Mammary epithelial cell (primary cell): ENCODE measurements at regions of chr19 and their contacts with region 1.

Region 1: DNA sequence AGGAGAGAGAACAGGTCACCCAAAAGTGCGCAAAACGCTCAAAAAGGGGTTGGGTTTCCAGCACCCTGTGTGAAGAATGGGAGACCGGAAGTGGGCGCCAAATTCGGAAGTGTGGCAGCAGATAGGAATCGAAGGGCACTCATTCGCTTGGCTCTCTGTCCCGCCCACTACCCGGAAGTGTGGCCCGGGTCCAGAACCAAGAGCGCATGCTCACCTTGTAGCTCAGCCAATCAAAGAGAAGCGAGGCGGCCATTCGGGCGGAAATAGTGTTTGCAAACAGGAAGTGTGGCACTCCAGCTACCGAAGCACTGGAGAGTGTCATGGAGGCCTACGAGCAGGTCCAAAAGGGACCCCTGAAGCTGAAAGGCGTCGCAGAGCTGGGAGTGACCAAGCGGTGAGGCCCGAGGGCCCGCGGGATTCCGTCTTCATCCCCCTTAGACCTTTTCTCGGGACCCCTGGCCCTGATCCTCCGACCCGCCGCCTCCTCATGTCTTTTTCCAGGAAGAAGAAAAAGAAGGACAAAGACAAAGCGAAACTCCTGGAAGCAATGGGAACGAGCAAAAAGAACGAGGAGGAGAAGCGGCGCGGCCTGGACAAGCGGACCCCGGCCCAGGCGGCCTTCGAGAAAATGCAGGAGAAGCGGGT is at the start of gene FAM32A:
- DNase-seq: peak; percentile 99
- H3K4me3 ChIP-seq: peak within 1 kb of the TSS; percentile 64 to 91 (median 91)
- H3K27ac ChIP-seq: peak within 1 kb of the TSS; percentile 67
- H3K4me1 ChIP-seq: no peaks in the 10 kb centered on the region
- H3K27me3 ChIP-seq: no peaks in the 10 kb centered on the region
- CTCF ChIP-seq: peak in 1 of 2 donors; percentile 18
- total RNA-seq, gene FAM32A: 57.3 to 59.5 TPM

Region 2: DNA sequence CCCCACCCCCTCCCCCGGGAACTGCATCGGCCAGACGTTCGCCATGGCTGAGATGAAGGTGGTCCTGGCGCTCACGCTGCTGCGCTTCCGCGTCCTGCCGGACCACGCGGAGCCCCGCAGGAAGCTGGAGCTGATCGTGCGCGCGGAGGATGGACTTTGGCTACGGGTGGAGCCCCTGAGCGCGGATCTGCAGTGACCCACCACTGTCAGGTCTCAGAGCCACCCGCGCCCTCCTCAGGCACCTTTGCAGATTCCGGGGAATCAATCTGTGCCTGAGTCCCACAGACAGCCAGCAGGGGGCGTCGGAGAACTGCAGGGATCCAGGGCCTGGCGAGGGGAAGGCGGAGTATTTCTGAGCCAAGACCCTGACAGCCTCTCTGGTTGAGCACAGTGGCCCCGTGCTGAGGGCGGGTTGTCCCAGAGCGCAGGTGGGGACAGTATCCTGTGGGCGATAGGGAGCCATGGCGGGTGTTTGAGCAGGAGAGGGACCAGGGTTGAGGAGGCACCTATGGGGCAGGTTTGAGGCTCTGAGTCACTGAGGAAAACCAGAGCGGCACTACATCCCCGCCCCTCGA is 600.6 kb before region 1 on chr19:
- CTCF ChIA-PET with region 1: no interaction called
- dilution Hi-C with region 1: no loop called
- in situ Hi-C with region 1: no loop called
- intact Hi-C with region 1: loop called (anchors 2 kb)
- DNase-seq: peak; percentile 45
- H3K4me3 ChIP-seq: no peak overlapping the region
- H3K27ac ChIP-seq: no peak overlapping the region
- H3K4me1 ChIP-seq: peaks cover 3% of the 10 kb centered on the region
- H3K27me3 ChIP-seq: no peaks in the 10 kb centered on the region
- CTCF ChIP-seq: peak; percentile 89 to 97

Region 3: GRCh38 chr19:15629003-15629880 is 556.0 kb before region 1 on chr19:
- CTCF ChIA-PET with region 1: no interaction called
- dilution Hi-C with region 1: no loop called
- in situ Hi-C with region 1: loop called (anchors 10 to 25 kb)
- intact Hi-C with region 1: loop called (anchors 1 kb)
- DNase-seq: peak; percentile 64
- H3K4me3 ChIP-seq: peak overlapping the region in 1 of 3 experiments; percentile 12
- H3K27ac ChIP-seq: no peak overlapping the region
- H3K4me1 ChIP-seq: peaks cover 3% of the 10 kb centered on the region
- H3K27me3 ChIP-seq: no peaks in the 10 kb centered on the region
- CTCF ChIP-seq: peak; percentile 89 to 94

Region 4: DNA sequence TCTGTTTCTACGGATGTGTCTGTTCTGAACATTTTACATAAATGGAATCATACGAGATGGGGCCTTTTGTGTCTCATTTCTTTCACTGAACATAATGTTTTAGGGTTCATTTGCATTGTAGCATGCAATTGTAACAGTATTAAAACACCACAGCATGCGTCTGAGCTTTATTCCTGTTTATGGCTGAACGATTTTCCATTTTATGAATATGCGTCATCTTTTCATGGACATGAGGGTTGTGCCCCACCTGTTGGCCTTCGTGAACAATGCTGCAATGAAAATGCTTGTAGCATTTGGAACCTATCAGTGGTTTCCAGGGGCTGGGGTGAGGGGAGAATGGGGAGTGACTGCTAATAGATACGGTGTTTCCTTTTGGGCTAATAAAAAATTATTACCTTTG is 374.9 kb before region 1 on chr19:
- CTCF ChIA-PET with region 1: no interaction called
- dilution Hi-C with region 1: no loop called
- in situ Hi-C with region 1: loop called in 1 of 2 experiments (anchors 25 kb)
- intact Hi-C with region 1: loop called (anchors 1 kb)
- DNase-seq: peak; percentile 38
- H3K4me3 ChIP-seq: no peak overlapping the region
- H3K27ac ChIP-seq: no peak overlapping the region
- H3K4me1 ChIP-seq: peaks cover 13% of the 10 kb centered on the region
- H3K27me3 ChIP-seq: peaks cover 2% of the 10 kb centered on the region
- CTCF ChIP-seq: peak in 1 of 2 donors; percentile 62

Region 5: DNA sequence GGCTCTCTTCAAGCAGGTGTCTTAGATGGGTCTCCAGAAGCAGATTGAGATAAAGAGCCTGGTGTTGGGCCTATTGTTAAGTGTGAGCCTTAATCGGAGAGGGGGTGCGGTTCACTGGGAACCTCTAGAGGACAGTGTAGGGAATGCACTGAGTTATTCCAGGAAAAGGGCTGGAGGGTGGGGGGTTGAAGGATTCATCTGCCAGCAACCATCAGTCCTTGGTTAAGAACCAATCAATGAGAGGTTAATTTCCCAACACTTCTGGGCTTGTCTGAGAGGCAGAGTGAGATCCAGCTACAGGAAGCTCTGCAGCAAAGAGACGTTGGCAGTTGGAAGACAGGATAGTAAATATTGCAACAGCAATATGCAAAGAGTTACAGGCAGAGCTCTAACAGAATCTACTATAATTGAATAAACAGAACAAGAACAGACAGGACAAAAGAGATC is 316.1 kb before region 1 on chr19:
- CTCF ChIA-PET with region 1: no interaction called
- dilution Hi-C with region 1: no loop called
- in situ Hi-C with region 1: no loop called
- intact Hi-C with region 1: loop called (anchors 2 kb)
- DNase-seq: peak; percentile 75
- H3K4me3 ChIP-seq: no peak overlapping the region
- H3K27ac ChIP-seq: no peak overlapping the region
- H3K4me1 ChIP-seq: peaks cover 12% of the 10 kb centered on the region
- H3K27me3 ChIP-seq: no peaks in the 10 kb centered on the region
- CTCF ChIP-seq: peak; percentile 80 to 87

Region 6: DNA sequence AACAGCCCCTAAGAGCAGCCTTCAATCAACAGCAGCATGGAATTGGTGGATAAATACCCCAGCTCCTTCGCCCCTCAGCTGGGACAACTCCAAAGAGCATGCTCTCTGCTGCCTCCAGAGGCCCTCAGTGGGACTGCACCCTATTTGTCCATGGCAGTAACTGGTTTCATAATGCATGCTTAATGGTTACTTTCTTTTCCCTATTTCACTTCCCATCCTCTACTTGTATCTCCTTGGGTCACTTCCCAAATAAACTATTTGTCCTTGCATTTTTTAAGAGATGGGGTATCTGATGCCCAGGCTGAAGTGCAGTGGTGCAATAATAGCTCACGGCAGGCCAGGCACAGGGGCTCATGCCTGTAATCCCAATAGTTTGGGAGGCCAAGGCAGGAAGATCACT is 122.5 kb before region 1 on chr19:
- CTCF ChIA-PET with region 1: no interaction called
- dilution Hi-C with region 1: no loop called
- in situ Hi-C with region 1: no loop called
- intact Hi-C with region 1: loop called (anchors 1 kb)
- DNase-seq: no peak
- H3K4me3 ChIP-seq: no peak overlapping the region
- H3K27ac ChIP-seq: no peak overlapping the region
- H3K4me1 ChIP-seq: peaks cover 12% of the 10 kb centered on the region
- H3K27me3 ChIP-seq: no peaks in the 10 kb centered on the region
- CTCF ChIP-seq: peak; percentile 87 to 98

Region 7: GRCh38 chr19:16111160-16111908 is 73.9 kb before region 1 on chr19 and contains the start of gene RAB8A:
- CTCF ChIA-PET with region 1: no interaction called
- dilution Hi-C with region 1: no loop called
- in situ Hi-C with region 1: no loop called
- intact Hi-C with region 1: loop called (anchors 1 kb)
- DNase-seq: peak; percentile 99
- H3K4me3 ChIP-seq: peak within 1 kb of the TSS; percentile 85 to 92 (median 86)
- H3K27ac ChIP-seq: peak within 1 kb of the TSS; percentile 71
- H3K4me1 ChIP-seq: peaks cover 10% of the 10 kb centered on the region
- H3K27me3 ChIP-seq: no peaks in the 10 kb centered on the region
- CTCF ChIP-seq: peak; percentile 63 to 82
- total RNA-seq, gene RAB8A: 46.0 to 70.1 TPM

Region 8: DNA sequence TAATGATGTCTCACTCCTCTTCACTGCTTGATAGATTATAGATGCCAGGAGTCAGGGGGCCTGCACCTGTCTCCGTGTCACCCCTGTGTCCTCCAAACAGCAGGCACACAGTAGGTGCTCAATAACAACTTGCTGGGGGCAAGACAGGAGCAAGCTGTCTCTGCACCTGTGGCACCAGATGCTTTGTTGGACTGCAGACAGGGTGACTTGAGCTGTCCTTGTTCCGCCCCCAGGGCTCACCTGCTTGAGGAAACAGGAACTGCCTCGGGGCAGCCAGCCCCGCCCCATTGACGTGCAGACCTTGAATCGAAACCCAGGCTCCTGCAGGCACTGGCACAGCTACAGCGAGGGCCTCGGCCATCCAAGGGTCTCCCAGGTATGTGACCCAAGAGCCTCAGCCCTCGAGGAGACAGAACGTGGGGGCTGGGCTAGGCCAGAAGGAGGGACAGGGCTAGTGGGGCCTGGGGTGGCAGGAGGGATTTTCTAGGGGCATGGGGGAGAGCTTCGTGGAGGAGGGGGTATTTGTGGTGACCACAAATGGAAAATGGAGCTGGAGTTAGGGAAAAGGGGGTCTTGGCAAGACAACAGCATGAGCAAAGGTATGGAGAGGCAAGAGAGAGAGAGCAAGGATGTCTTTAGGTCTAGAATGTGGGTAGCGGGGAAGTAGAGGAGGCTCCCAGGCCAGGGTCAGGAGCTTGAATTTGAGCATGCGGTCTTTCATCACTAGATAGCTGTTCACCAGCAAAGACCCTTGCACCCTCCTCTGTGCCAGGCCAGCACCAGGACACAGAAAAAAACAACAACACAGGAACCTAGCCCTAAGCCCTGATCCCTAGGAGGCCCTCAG is 41.6 kb before region 1 on chr19 and contains the start of gene HSH2D:
- CTCF ChIA-PET with region 1: no interaction called
- dilution Hi-C with region 1: no loop called
- in situ Hi-C with region 1: no loop called
- intact Hi-C with region 1: no loop called
- DNase-seq: peak; percentile 78
- H3K4me3 ChIP-seq: no peak within 1 kb of the TSS
- H3K27ac ChIP-seq: no peak within 1 kb of the TSS
- H3K4me1 ChIP-seq: peaks cover 5% of the 10 kb centered on the region
- H3K27me3 ChIP-seq: no peaks in the 10 kb centered on the region
- CTCF ChIP-seq: no peak
- total RNA-seq, gene HSH2D: under 0.01 to 0.28 TPM